Activated T-helper 1 cell treated with anti-CD3 and anti-CD28 coated beads, Interleukin-12 subunit alpha, Interleukin-12 subunit beta, Interleukin-2, Interleukin-4 antibody, amounts not matched to agents 30 ng/mL and 10 ng/mL and 1 ng/mL, durations not matched to agents 14 hours and 24 hours and 36 hours (primary cell): ENCODE measurements at regions of chr11 and their contacts with region 1.

Region 1: DNA sequence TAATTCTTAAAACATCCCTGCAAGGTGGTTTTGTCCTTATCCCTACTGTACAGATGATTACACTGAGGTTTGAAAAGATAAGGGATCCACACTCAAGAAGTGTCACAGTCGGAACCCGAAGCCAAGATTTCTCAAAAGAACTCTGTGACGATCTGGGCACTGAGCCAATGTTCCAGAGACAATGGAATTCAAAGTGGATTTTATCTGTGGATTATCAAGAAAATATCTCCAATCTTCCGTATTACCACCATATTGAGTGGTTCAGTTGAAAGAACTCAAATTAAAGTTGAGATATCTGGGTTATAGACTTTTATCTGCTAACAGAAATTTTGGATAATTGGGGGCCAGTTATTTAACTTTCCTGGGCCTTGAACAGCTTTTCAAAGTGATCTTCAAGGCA is 100.0 kb upstream of the GRAMD1B start:
- DNase-seq: no peak
- H3K4me3 Mint-ChIP-seq: no peak overlapping the region
- H3K27ac Mint-ChIP-seq: no peak overlapping the region
- H3K4me1 Mint-ChIP-seq: no peaks in the 10 kb centered on the region
- H3K27me3 Mint-ChIP-seq: no peaks in the 10 kb centered on the region

Region 2: DNA sequence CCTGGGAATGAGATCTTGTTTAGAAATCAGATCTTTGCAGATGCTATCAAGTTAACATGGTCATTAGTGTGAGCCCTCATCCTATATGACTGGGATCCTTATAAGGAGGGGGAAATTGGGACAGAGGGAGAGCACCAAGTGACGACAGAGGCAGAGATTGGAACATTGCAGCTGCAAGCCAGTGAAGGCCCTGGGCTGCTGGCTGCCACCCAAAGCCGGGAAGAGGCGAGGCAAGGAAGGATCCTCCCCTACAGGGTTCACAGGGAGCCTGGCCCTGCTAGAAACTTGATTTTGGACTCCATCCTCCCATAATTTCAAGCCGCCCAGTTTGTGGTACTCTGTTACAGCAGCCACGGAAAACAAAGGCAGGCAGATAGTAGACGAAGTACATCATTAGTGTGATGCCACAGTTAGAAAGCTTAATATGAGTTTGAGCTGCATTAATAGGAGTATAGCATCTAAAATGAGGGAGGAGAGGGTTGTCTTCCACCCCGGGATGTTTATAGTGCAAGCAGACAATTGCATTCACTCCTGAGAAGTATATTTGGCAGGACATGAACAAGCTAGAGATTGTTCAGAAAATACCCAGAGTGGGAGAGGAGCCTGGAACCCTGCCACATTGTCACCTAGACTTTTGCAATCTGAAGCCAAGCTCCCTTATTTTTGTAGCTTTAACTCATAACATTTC is 78.3 kb before region 1 on chr11:
- intact Hi-C with region 1: no loop called
- DNase-seq: no peak
- H3K4me3 Mint-ChIP-seq: no peak overlapping the region
- H3K27ac Mint-ChIP-seq: no peak overlapping the region
- H3K4me1 Mint-ChIP-seq: peaks cover 7% of the 10 kb centered on the region
- H3K27me3 Mint-ChIP-seq: peaks cover 35% of the 10 kb centered on the region

Region 3: GRCh38 chr11:123308077-123308476 is 22.0 kb before region 1 on chr11:
- intact Hi-C with region 1: loop called (anchors 2 kb)
- DNase-seq: no peak
- H3K4me3 Mint-ChIP-seq: no peak overlapping the region
- H3K27ac Mint-ChIP-seq: no peak overlapping the region
- H3K4me1 Mint-ChIP-seq: peaks cover 40% of the 10 kb centered on the region
- H3K27me3 Mint-ChIP-seq: no peaks in the 10 kb centered on the region